ENCODE measurements at regions of chr2 and their contacts with region 1.

Region 1: DNA sequence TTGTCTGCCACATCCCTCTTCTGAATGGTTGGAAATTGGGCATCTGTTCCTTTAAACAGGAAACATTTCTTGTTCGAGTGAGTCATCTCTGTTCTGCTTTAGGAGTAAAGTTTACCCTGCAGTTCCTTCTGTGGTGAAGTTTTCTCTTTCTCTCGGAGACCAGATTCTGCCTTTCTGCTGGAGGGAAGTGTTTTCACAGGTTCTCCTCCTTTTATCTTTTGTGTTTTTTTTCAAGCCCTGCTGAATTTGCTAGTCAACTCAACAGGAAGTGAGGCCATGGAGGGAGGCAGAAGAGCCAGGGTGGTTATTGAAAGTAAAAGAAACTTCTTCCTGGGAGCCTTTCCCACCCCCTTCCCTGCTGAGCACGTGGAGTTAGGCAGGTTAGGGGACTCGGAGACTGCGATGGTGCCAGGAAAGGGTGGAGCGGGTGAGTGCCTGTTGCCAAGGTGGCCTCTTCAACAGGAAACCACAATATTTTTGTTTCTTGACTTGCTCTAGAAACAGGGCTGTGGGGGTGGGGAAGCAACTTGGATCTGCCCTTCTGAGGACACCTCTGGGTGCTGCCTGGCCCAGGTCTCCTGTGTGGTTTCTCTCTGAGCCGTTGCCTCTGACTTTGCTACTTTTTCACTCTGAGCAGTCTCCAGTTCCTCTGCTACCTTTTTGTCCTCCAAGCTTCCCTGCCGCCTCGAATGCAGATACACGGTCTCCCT is 2.2 kb upstream of the CASP8 start:
- DNase-seq: peak; percentile 68
- ATAC-seq: peak; percentile 61
- H3K4me3 Mint-ChIP-seq: peak overlapping the region; percentile 90
- H3K27ac Mint-ChIP-seq: peak overlapping the region; percentile 98
- H3K4me1 Mint-ChIP-seq: peaks cover 83% of the 10 kb centered on the region
- H3K27me3 Mint-ChIP-seq: no peaks in the 10 kb centered on the region
- CTCF ChIP-seq: no peak

Region 2: GRCh38 chr2:201182650-201183364 is 75.3 kb before region 1 on chr2 and contains the start of gene CASP10:
- CTCF ChIA-PET with region 1: interaction called, 4 read pairs
- POLR2A ChIA-PET with region 1: interaction called, 4 read pairs
- intact Hi-C with region 1: loop called (anchors 2 kb)
- DNase-seq: no peak
- ATAC-seq: peak; percentile 77
- H3K4me3 Mint-ChIP-seq: peak within 1 kb of the TSS; percentile 92
- H3K27ac Mint-ChIP-seq: peak within 1 kb of the TSS; percentile 83
- H3K4me1 Mint-ChIP-seq: peaks cover 48% of the 10 kb centered on the region
- H3K27me3 Mint-ChIP-seq: no peaks in the 10 kb centered on the region
- CTCF ChIP-seq: no peak
- total RNA-seq, gene CASP10: 9.5 and 13.8 TPM in 2 replicates

Region 3: GRCh38 chr2:201220102-201220570 is 38.0 kb before region 1 on chr2:
- CTCF ChIA-PET with region 1: interaction called, 3 read pairs
- POLR2A ChIA-PET with region 1: interaction called, 10 read pairs
- intact Hi-C with region 1: no loop called
- DNase-seq: no peak
- ATAC-seq: peak; percentile 42
- H3K4me3 Mint-ChIP-seq: no peak overlapping the region
- H3K27ac Mint-ChIP-seq: peak overlapping the region; percentile 47
- H3K4me1 Mint-ChIP-seq: peaks cover 20% of the 10 kb centered on the region
- H3K27me3 Mint-ChIP-seq: no peaks in the 10 kb centered on the region
- CTCF ChIP-seq: no peak

Region 4: GRCh38 chr2:201275990-201276389 is 17.9 kb after region 1 on chr2:
- CTCF ChIA-PET with region 1: no interaction called
- POLR2A ChIA-PET with region 1: interaction called, 6 read pairs
- intact Hi-C with region 1: loop called (anchors 2 kb)
- DNase-seq: no peak
- ATAC-seq: no peak
- H3K4me3 Mint-ChIP-seq: no peak overlapping the region
- H3K27ac Mint-ChIP-seq: no peak overlapping the region
- H3K4me1 Mint-ChIP-seq: peaks cover 25% of the 10 kb centered on the region
- H3K27me3 Mint-ChIP-seq: no peaks in the 10 kb centered on the region
- CTCF ChIP-seq: no peak

Measured in activated B cell treated with CpG ODN at 0.5 μM for 24 hours (primary cell).